Ovary (tissue), 10 donors: ENCODE measurements at regions of chr17 and their contacts with region 1.

Region 1: GRCh38 chr17:27332485-27333409 is 38.8 kb downstream of the WSB1 start:
- DNase-seq: peak; percentile 97
- H3K4me3 ChIP-seq: peak overlapping the region; percentile 46
- H3K27ac ChIP-seq: peak overlapping the region; percentile 82 to 92
- H3K4me1 ChIP-seq: peaks cover 4% of the 10 kb centered on the region
- H3K27me3 ChIP-seq: no peaks in the 10 kb centered on the region
- CTCF ChIP-seq: peak; percentile 92 to 96 (median 93)
- EP300 ChIP-seq: no peak
- POLR2A ChIP-seq: peak; percentile 22

Region 2: GRCh38 chr17:27236717-27237315 is 95.9 kb before region 1 on chr17:
- intact Hi-C with region 1: loop called in 2 of 4 experiments (anchors 2 kb)
- DNase-seq: peak; percentile 58 to 89 (median 72)
- H3K4me3 ChIP-seq: no peak overlapping the region
- H3K27ac ChIP-seq: no peak overlapping the region
- H3K4me1 ChIP-seq: no peaks in the 10 kb centered on the region
- H3K27me3 ChIP-seq: no peaks in the 10 kb centered on the region
- CTCF ChIP-seq: peak; percentile 52 to 94 (median 91)
- EP300 ChIP-seq: no peak
- POLR2A ChIP-seq: no peak

Region 3: DNA sequence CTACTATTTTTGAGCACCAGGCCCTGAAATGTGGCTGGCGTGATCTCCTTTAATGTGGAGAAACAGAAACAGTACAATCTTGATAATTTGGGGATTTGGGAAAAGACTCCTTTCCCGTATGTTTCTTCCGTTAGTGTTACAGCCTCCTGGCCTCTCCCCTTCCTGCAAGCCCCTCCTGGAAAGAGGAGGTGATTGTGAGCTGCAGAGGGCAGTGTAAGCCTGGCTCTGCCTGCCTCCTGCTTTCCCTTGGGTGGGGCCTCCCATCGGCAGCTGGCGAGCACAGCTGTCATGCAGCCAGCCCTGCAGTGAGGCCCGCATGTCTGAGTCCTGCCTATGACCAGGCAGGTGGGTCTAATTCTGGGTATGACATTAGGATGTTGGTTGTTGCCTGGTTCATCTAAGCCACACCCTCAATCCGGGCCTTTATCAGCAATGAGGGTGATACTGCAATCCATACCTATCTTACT is 87.5 kb before region 1 on chr17:
- intact Hi-C with region 1: loop called in 1 of 4 experiments (anchors 2 kb)
- DNase-seq: peak; percentile 61 to 82 (median 78)
- H3K4me3 ChIP-seq: peak overlapping the region; percentile 8
- H3K27ac ChIP-seq: peak overlapping the region in 1 of 2 donors; percentile 61
- H3K4me1 ChIP-seq: peaks cover 5% of the 10 kb centered on the region
- H3K27me3 ChIP-seq: no peaks in the 10 kb centered on the region
- CTCF ChIP-seq: peak; percentile 27 to 55 (median 48)
- EP300 ChIP-seq: no peak
- POLR2A ChIP-seq: no peak

Region 4: GRCh38 chr17:27268394-27269084 is 64.2 kb before region 1 on chr17:
- intact Hi-C with region 1: no loop called
- DNase-seq: no peak
- H3K4me3 ChIP-seq: no peak overlapping the region
- H3K27ac ChIP-seq: no peak overlapping the region
- H3K4me1 ChIP-seq: no peaks in the 10 kb centered on the region
- H3K27me3 ChIP-seq: no peaks in the 10 kb centered on the region
- CTCF ChIP-seq: no peak
- EP300 ChIP-seq: no peak
- POLR2A ChIP-seq: no peak

Region 5: DNA sequence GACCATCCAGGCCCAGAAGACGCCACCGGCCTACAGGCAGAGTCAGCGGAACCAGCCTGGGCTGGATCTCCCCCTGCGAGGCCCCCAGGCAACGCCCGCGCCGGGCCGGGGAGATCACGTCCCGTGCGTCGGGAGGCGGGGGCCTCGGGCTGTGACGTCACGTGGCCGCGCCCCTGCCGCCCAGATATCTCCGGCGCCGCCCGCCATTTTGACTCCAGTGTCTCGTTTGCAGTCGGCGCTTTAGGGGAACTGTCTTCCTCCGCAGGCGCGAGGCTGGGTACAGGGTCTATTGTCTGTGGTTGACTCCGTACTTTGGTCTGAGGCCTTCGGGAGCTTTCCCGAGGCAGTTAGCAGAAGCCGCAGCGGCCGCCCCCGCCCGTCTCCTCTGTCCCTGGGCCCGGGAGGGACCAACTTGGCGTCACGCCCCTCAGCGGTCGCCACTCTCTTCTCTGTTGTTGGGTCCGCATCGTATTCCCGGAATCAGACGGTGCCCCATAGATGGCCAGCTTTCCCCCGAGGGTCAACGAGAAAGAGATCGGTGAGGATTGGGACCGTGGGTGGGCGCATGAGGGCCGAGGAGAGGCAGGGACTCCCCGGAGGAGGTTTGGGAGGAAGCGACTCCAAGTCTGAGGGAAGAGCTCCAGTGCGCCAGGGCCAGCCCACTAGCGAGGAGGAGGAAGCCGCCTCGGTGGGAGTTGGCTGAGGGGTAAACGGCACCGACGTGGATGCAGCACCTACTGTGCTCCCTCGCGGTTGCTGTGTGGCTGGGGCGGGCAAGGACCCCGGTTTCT is 38.7 kb before region 1 on chr17 and contains the start of gene WSB1:
- intact Hi-C with region 1: loop called in 1 of 4 experiments (anchors 5 kb)
- DNase-seq: peak; percentile 95 to 98 (median 97)
- H3K4me3 ChIP-seq: peak within 1 kb of the TSS; percentile 93
- H3K27ac ChIP-seq: peak within 1 kb of the TSS; percentile 99 to 100
- H3K4me1 ChIP-seq: peaks cover 12% of the 10 kb centered on the region
- H3K27me3 ChIP-seq: no peaks in the 10 kb centered on the region
- CTCF ChIP-seq: peak in 2 of 3 donors; percentile 27 to 44
- EP300 ChIP-seq: peak; percentile 86
- POLR2A ChIP-seq: peak; percentile 99
- total RNA-seq, gene WSB1: 135 to 214 (median 172) TPM

Region 6: GRCh38 chr17:27353461-27354050 is 20.8 kb after region 1 on chr17:
- intact Hi-C with region 1: loop called in 1 of 4 experiments (anchors 2 kb)
- DNase-seq: peak; percentile 91 to 95 (median 94)
- H3K4me3 ChIP-seq: peak overlapping the region; percentile 59
- H3K27ac ChIP-seq: peak overlapping the region; percentile 80 to 94
- H3K4me1 ChIP-seq: no peaks in the 10 kb centered on the region
- H3K27me3 ChIP-seq: no peaks in the 10 kb centered on the region
- CTCF ChIP-seq: peak; percentile 88 to 99 (median 99)
- EP300 ChIP-seq: peak; percentile 7
- POLR2A ChIP-seq: peak; percentile 94